PC-9 (cell line): ENCODE measurements at regions of chr6 and their contacts with region 1.

Region 1: GRCh38 chr6:30130887-30131862 is 4.8 kb upstream of the TRIM40 start:
- DNase-seq: peak; percentile 59 to 80
- H3K4me3 ChIP-seq: no peak overlapping the region; the same call in 1 of the 2 replicates
- H3K27ac ChIP-seq: no peak overlapping the region
- H3K4me1 ChIP-seq: peaks cover 28% of the 10 kb centered on the region
- H3K27me3 ChIP-seq: no peaks in the 10 kb centered on the region
- CTCF ChIP-seq: peak; percentile 98

Region 2: DNA sequence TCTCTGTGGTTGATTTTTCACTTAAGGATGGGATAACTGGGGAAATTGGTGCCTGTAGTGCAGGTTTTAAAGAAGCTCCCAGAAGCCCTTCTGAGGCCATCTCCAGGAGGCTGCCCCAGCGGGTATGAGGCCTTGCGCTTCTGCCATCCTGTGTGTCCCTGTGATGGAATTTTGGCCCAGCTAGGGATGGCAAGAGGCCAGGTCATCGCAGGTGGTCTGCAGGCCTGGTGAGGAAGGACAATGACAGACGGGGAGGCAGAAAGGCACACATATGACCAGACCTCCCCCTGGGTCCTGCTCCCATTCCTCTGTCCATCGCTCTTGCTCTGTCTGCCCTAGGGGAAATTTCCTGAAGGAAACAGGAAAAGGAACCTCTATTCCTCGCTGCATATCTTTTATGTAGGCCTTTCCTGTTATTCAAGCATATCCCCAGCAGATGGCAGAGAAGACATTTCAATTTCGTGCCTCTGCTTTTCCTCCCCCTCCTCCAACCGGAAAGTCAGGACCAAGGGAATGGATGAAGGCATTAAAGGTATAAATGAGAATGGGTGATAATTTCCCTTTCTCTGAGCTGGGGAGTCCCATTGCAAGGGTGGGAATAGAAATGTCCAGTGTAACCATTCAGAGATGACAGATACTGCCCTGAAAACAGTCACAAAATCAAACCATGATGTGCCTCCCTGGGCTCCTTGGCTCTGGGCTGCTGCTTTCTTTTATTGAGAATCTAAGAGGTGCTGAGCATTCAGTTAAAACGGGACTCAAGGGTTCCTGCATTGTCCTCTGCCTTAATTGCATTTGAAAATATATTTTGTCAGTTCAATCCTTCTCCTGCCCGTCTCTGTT is 425.6 kb before region 1 on chr6:
- CTCF ChIA-PET with region 1: interaction called, 4 read pairs
- POLR2A ChIA-PET with region 1: no interaction called
- intact Hi-C with region 1: loop called (anchors 2 kb)
- DNase-seq: peak in 1 of 2 experiments; percentile 47
- H3K4me3 ChIP-seq: no peak overlapping the region
- H3K27ac ChIP-seq: no peak overlapping the region
- H3K4me1 ChIP-seq: no peaks in the 10 kb centered on the region
- H3K27me3 ChIP-seq: peaks cover 11% of the 10 kb centered on the region; the same call in 1 of the 2 replicates
- CTCF ChIP-seq: peak; percentile 74

Region 3: GRCh38 chr6:29861521-29862255 is 269.5 kb before region 1 on chr6:
- CTCF ChIA-PET with region 1: interaction called, 12 read pairs
- POLR2A ChIA-PET with region 1: no interaction called
- intact Hi-C with region 1: no loop called
- DNase-seq: no peak
- H3K4me3 ChIP-seq: no peak overlapping the region
- H3K27ac ChIP-seq: no peak overlapping the region
- H3K4me1 ChIP-seq: no peaks in the 10 kb centered on the region
- H3K27me3 ChIP-seq: peaks cover 11% of the 10 kb centered on the region
- CTCF ChIP-seq: no peak

Region 4: DNA sequence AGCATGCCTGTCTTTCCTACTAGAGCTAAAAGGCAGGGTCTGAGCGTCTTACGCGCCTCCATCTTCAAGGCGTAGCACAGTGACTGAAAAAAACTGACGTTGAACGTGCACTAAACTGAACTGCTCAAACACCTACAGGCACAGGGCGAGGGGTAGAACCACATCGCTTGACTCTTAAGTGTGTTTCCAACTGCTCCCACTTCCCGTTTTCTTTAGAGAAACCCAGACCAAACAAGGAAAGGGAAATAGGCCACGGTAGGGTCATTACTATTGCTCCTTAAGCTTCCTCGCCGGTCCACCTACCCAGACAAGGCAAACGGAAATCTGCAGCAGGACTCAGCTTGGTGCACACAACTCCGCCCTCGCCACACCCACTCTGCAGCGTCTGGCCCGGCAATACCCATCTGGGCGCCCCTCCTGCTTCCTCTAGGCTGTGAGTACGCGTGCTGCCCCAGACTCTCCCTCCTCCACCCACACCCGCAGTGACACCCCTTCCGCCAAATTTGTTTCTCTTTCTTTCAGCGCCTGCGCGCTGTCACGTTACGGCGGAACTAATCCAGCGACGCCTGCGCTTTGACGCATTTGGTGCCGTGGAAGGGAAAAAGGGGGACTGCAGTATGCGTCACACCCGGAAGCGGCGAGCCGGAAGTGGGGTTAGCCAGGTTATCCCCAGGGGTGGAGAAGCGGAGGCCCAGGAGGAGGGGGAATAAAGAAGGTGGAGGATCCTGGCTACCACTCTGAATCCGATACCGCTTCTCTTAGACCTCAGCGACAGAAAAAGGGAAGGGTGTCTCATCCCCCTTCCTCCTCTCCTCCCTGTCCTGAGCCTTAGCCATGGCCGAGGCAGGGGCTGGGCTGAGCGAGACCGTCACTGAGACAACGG is 64.4 kb before region 1 on chr6 and contains the start of gene PPP1R11:
- CTCF ChIA-PET with region 1: interaction called, 3 read pairs
- POLR2A ChIA-PET with region 1: no interaction called
- intact Hi-C with region 1: loop called (anchors 2 kb)
- DNase-seq: peak; percentile 96 to 99
- H3K4me3 ChIP-seq: peak within 1 kb of the TSS; percentile 81
- H3K27ac ChIP-seq: peak within 1 kb of the TSS; percentile 40
- H3K4me1 ChIP-seq: peaks cover 24% of the 10 kb centered on the region
- H3K27me3 ChIP-seq: no peaks in the 10 kb centered on the region
- CTCF ChIP-seq: no peak
- total RNA-seq, gene PPP1R11: 48.3 and 49.3 TPM in 2 replicates

Region 5: DNA sequence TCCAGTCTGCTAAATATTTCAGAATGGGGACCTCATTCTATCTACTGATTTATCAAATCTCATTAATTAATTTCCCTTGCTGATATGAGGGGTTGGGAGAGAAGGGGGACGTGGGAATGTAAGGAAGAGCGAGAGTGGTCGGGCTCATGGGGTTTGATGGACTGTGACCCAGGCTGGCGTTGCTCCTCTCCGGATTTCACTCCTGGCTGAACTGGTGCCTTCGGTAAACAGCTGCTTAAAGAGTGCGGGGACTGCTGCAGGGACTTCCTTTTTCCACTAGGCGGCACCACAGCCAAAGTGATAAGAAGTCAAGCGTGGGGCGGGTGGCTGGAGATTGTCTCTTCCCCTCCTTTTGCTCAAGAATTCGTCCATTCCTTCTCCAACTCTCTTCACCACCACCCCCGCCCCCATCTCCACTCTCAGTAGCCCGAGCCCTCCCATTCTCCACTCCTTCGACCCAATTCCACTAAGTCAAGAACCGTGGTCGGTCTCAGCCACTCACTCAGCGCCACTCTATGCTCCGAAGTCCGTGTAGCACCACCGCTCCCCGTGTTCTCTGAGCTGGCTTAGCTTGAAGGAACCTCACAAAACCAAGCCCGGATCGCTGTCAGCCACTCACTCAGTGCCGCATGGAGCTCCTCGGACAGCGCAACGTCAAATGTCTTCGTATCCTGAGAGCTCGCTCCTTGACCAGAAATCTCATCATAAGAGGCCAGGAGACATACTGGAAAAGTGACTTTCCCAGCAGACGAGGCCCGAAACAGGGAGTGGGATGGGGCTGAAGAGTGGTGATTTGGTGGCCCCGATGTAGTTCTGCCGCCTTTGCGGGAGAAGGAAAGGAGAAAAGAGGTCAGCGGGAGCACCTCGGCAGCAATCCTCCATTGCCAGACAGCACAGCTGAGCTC is 28.0 kb before region 1 on chr6:
- CTCF ChIA-PET with region 1: interaction called, 28 read pairs
- POLR2A ChIA-PET with region 1: no interaction called
- intact Hi-C with region 1: loop called (anchors 1 kb)
- DNase-seq: peak; percentile 72 to 85
- H3K4me3 ChIP-seq: peak overlapping the region; percentile 55; the same call in 1 of the 2 replicates
- H3K27ac ChIP-seq: no peak overlapping the region
- H3K4me1 ChIP-seq: peaks cover 54% of the 10 kb centered on the region
- H3K27me3 ChIP-seq: no peaks in the 10 kb centered on the region
- CTCF ChIP-seq: peak; percentile 94

Region 6: GRCh38 chr6:30212865-30213666 is 81.9 kb after region 1 on chr6 and contains the start of gene TRIM26:
- CTCF ChIA-PET with region 1: interaction called, 15 read pairs
- POLR2A ChIA-PET with region 1: no interaction called
- intact Hi-C with region 1: no loop called
- DNase-seq: peak; percentile 94 to 99
- H3K4me3 ChIP-seq: peak within 1 kb of the TSS; percentile 95
- H3K27ac ChIP-seq: peak within 1 kb of the TSS; percentile 83
- H3K4me1 ChIP-seq: peaks cover 27% of the 10 kb centered on the region
- H3K27me3 ChIP-seq: no peaks in the 10 kb centered on the region
- CTCF ChIP-seq: no peak
- total RNA-seq, gene TRIM26: 45.3 and 53.9 TPM in 2 replicates

Region 7: DNA sequence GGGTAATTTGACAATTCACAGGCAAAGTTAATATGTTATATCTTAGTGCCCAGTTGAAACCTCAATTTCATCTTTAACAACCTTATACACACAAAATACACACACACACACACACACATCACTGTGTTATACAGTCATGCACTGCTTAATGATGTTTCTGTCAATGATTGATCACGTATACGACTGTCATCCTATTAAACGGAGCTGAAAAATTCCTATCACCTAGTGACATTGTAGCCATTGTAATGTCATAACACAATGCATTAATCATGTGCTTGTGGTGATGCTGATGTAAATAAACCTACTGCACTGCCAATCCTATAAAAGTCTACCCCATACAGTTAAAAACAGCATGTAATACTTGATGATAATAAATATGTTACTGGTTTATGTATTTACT is 293.4 kb after region 1 on chr6:
- CTCF ChIA-PET with region 1: no interaction called
- POLR2A ChIA-PET with region 1: no interaction called
- intact Hi-C with region 1: no loop called
- DNase-seq: no peak
- H3K4me3 ChIP-seq: no peak overlapping the region
- H3K27ac ChIP-seq: no peak overlapping the region
- H3K4me1 ChIP-seq: no peaks in the 10 kb centered on the region
- H3K27me3 ChIP-seq: peaks cover 79% of the 10 kb centered on the region
- CTCF ChIP-seq: no peak